Activated CD4-positive, alpha-beta T cell treated with anti-CD3 and anti-CD28 coated beads for 36 hours (primary cell): ENCODE measurements at regions of chr3 and their contacts with region 1.

Region 1: DNA sequence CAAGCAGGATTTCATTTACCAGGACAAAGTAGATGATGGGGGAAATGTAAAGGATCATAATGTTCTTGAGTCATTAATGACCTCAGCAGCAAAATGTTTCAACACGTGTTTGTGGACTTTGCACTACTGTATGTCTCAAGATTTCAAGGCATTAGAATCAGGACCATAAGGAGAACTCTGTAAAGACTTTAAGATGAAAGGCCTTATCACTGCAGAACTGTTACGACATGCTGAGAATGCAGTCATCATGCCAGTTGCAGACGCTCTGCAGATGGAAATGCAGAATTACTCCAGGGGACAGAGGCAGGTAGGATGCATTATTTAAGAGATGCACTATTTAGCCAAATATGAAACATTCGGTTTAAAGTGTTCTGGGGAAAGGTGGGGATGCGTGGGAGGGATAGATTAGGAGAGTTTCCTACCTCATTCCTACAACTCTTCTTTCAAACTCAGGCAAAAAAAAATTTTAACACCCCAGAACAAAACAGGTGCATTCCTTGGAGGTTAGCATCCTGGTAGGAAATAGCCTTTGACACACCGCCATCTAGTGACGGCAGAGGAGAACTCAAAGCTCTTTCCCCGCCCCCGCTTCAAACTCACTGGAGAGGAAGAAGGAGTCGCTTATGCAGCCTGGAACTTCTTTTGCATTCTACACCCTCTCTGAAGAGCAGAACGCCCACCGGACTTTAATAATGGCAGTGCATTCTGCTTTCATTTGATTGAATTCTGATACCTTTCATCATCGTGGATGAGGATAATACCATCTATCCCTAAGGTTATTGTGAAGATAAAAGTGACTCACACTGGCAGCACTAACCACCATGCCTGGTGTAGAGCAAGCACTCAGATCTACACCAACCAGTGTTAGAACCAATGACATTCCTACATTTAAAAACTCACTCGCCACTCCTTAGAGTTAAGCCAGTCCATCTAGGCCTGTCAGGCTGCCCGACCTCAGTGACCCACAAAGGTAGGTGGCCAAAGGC is 43.1 kb upstream of the TOPAZ1 start:
- DNase-seq: peak; percentile 83
- ATAC-seq: peak; percentile 83
- H3K4me3 Mint-ChIP-seq: no peak overlapping the region
- H3K27ac Mint-ChIP-seq: no peak overlapping the region
- H3K4me1 Mint-ChIP-seq: no peaks in the 10 kb centered on the region
- H3K27me3 Mint-ChIP-seq: peaks cover 22% of the 10 kb centered on the region

Region 2: DNA sequence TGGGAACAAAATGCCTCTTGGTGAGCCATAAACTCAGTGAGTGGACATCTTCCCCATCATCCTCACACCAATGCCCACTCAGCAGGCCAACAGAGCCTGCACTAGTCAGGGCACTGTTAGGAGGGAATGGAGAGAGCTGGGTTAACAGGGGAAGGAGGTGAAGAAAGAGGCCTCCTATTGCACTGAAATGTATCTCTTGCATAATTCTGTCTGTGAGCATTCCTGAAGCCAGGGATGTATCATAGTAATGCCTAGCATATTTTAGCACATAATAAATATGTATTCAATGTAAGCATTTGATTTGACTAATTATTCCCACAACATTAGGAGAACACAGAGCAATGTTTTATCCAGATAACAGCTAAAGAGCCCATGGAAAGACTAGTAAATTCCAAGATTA is 658.0 kb before region 1 on chr3:
- CTCF ChIA-PET with region 1: no interaction called
- POLR2A ChIA-PET with region 1: no interaction called
- intact Hi-C with region 1: loop called (anchors 1 kb)
- DNase-seq: no peak
- ATAC-seq: no peak
- H3K4me3 Mint-ChIP-seq: no peak overlapping the region
- H3K27ac Mint-ChIP-seq: no peak overlapping the region
- H3K4me1 Mint-ChIP-seq: peaks cover 4% of the 10 kb centered on the region
- H3K27me3 Mint-ChIP-seq: no peaks in the 10 kb centered on the region

Region 3: GRCh38 chr3:43769471-43770425 is 428.8 kb before region 1 on chr3:
- CTCF ChIA-PET with region 1: interaction called, 3 read pairs
- POLR2A ChIA-PET with region 1: no interaction called
- intact Hi-C with region 1: loop called (anchors 1 to 5 kb)
- DNase-seq: peak; percentile 90
- ATAC-seq: peak; percentile 51
- H3K4me3 Mint-ChIP-seq: no peak overlapping the region
- H3K27ac Mint-ChIP-seq: no peak overlapping the region
- H3K4me1 Mint-ChIP-seq: peaks cover 25% of the 10 kb centered on the region
- H3K27me3 Mint-ChIP-seq: no peaks in the 10 kb centered on the region

Region 4: GRCh38 chr3:43855674-43856299 is 342.8 kb before region 1 on chr3:
- CTCF ChIA-PET with region 1: interaction called, 10 read pairs
- POLR2A ChIA-PET with region 1: no interaction called
- intact Hi-C with region 1: loop called (anchors 1 to 2 kb)
- DNase-seq: peak; percentile 71
- ATAC-seq: peak; percentile 66
- H3K4me3 Mint-ChIP-seq: no peak overlapping the region
- H3K27ac Mint-ChIP-seq: no peak overlapping the region
- H3K4me1 Mint-ChIP-seq: no peaks in the 10 kb centered on the region
- H3K27me3 Mint-ChIP-seq: peaks cover 43% of the 10 kb centered on the region

Region 5: GRCh38 chr3:43879166-43879565 is 319.4 kb before region 1 on chr3:
- CTCF ChIA-PET with region 1: interaction called, 3 read pairs
- POLR2A ChIA-PET with region 1: no interaction called
- intact Hi-C with region 1: loop called in 1 of 2 experiments (anchors 2 kb)
- DNase-seq: peak; percentile 31
- ATAC-seq: peak; percentile 36
- H3K4me3 Mint-ChIP-seq: no peak overlapping the region
- H3K27ac Mint-ChIP-seq: no peak overlapping the region
- H3K4me1 Mint-ChIP-seq: no peaks in the 10 kb centered on the region
- H3K27me3 Mint-ChIP-seq: peaks cover 7% of the 10 kb centered on the region

Region 6: GRCh38 chr3:43998836-43999727 is 199.5 kb before region 1 on chr3:
- CTCF ChIA-PET with region 1: no interaction called
- POLR2A ChIA-PET with region 1: no interaction called
- intact Hi-C with region 1: loop called (anchors 1 to 5 kb)
- DNase-seq: no peak
- ATAC-seq: no peak
- H3K4me3 Mint-ChIP-seq: peak overlapping the region; percentile 58
- H3K27ac Mint-ChIP-seq: no peak overlapping the region
- H3K4me1 Mint-ChIP-seq: peaks cover 39% of the 10 kb centered on the region
- H3K27me3 Mint-ChIP-seq: peaks cover 68% of the 10 kb centered on the region

Region 7: DNA sequence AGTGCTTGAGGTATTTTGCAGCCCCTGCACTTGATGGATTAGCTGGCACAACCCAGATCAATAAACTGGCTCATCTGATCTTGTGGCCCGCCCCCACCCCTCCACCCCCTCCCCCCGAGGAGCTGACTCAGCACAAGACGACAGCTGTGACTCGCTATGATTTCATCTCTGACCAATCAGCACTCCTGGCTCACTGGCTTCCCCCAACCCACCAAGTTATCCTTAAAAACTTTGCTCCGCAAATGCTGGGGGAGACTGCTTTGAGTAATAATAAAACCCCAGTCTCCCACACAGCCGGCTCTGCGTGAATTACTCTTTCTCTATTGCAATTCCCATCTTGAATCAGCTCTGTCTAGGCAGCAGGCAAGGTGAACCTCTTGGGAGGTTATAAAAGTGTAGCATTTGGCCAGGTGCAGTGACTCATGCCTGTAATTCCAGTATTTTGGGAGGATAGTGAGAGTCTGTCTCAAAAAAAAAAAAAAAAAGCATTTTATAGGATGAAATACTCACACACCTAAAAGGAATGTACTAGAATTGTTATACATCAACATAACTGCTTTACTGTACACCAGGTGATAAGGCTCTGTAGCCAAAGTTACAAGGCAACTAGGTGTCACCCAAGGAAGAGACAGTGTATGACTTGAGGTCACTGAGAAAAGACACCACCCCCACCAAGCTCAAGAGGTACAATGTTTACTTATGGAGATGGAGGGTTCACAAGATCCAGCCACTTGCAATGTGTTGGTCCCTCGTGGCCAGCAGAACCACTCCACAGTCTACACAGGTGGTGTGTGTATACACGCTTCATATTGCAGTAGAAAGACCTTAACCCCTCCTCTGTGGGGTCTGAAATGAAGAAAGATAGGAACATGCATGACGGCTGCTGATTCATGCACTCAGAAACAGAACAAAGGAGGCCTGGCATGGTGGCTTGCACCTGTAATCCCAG is 270.3 kb after region 1 on chr3:
- CTCF ChIA-PET with region 1: no interaction called
- POLR2A ChIA-PET with region 1: interaction called, 10 read pairs
- intact Hi-C with region 1: no loop called
- DNase-seq: peak; percentile 72
- ATAC-seq: peak; percentile 85
- H3K4me3 Mint-ChIP-seq: no peak overlapping the region
- H3K27ac Mint-ChIP-seq: peak overlapping the region; percentile 52
- H3K4me1 Mint-ChIP-seq: peaks cover 42% of the 10 kb centered on the region
- H3K27me3 Mint-ChIP-seq: no peaks in the 10 kb centered on the region